ENCODE measurements at regions of chr6 and their contacts with region 1.

Region 1: DNA sequence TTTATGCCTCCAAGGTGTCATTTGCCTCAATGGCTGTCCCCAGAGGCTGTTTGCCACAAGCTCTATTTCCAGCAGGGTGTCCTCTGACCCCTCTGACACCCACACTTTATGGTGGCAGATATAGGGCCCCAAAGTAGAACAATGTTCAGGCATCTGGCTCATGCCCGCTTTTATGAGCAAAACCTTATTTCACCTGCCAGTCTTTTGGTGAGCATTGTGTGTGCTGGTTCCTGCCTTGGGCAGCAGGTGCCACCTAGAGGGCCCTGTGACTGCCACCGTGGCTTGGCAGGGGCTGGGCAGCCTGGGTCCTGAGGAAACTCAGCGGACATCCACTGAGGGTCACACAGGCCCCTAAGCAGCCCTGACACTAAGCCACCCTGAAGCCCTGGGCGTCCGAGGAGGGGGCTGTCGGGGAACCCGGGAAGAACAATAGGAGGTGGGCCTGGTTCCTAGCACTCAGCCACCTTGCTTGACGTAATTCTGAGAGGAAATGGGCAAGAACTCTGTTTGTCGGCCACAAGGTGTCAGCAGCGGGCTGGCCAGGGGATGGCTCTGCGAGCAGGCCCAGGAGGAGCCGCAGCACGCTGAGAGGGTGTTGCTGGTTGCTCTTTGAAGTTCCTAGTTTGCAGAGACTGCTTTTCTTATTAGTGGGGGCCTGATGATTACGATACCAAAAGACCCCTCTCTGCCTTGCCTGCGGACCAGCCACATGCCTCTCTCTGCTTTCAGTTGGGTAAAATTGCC is 148.9 kb downstream of the SCML4 start:
- DNase-seq: peak; percentile 89
- H3K4me3 ChIP-seq: peak overlapping the region; percentile 21
- H3K27ac ChIP-seq: no peak overlapping the region
- H3K4me1 ChIP-seq: peaks cover 25% of the 10 kb centered on the region
- CTCF ChIP-seq: peak; percentile 100

Region 2: DNA sequence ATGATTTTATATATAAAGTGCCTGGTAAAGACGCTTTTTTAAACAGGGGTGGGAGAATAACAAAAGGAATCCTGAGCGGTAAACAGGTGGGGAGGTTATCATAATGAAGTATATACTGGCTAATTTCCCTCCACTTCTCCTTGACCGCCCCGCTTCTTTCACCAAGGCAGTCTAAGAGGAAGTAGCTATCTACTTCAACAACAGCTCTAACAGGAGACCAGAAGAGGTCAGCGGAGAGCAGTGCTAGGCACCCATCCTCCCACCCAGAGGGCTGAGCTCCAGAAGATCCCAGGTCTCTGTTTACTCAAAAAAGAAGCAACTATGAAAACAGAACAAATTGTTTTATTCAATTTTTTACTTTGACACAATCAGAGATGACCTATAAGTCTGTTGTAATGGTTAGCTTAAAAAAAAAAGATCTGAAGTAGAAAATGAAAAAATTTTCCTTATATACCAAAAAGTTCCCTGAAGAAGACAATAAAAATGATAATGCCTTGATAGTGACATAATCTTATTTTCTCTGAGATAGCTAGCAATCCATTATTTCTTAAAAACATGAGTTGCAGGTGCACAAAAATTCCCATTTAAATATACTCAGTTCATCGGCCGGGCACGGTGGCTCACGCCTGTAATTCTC is 356.9 kb before region 1 on chr6:
- CTCF ChIA-PET with region 1: interaction called, 5 read pairs
- POLR2A ChIA-PET with region 1: interaction called, 3 read pairs
- intact Hi-C with region 1: loop called (anchors 1 kb)
- DNase-seq: peak; percentile 80
- H3K4me3 ChIP-seq: no peak overlapping the region
- H3K27ac ChIP-seq: no peak overlapping the region
- H3K4me1 ChIP-seq: peaks cover 33% of the 10 kb centered on the region
- CTCF ChIP-seq: peak; percentile 98

Region 3: DNA sequence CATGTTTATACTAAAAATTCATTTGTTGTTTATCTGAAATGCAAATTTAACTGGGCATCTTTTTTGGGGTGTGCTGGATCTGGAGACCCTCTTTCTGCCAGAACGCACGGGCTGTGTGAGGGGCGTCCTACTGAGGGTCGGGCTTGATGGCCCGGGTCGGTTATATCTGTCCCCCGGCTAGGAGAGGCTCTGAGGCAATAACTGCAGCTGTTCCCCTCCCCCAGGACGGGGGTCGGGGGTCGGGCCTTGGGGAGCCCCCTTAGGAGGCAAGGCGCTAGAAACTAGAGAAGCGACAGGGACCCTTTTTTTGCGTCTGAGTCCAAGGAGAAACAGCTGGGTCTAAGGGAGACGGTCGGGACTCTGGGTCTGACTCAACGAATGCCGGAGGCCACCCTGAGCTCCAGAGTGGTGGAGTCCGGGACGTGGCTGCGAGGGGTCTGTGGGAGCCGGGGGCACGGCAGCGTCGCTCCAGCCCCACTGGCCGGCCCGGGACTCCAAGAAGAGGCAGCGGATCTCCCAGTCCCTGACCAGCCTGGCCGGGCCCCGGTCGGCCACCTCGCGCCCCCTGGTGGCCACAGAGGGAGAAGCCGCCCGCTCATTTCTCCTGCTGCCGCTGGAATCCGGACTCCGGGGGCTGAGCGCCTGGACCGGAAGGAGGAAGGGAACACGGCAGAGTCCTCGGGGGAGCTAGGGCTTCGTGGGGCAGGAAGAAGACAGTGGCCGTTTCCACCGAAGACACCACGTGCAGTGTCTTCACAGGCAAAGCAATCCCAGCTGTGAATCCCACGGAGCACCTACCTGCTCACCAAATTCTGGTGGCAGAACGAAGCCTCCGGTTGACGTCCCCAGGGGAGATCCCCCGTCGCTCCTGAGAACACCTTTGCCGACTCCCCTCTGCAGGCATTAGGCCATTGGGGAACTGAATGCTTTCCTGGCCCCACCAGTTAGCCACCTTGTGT is 173.0 kb after region 1 on chr6:
- CTCF ChIA-PET with region 1: interaction called, 4 read pairs
- POLR2A ChIA-PET with region 1: interaction called, 4 read pairs
- intact Hi-C with region 1: loop called (anchors 1 kb)
- DNase-seq: peak; percentile 68
- H3K4me3 ChIP-seq: peak overlapping the region; percentile 49
- H3K27ac ChIP-seq: no peak overlapping the region
- H3K4me1 ChIP-seq: peaks cover 6% of the 10 kb centered on the region
- CTCF ChIP-seq: peak; percentile 95

Region 4: DNA sequence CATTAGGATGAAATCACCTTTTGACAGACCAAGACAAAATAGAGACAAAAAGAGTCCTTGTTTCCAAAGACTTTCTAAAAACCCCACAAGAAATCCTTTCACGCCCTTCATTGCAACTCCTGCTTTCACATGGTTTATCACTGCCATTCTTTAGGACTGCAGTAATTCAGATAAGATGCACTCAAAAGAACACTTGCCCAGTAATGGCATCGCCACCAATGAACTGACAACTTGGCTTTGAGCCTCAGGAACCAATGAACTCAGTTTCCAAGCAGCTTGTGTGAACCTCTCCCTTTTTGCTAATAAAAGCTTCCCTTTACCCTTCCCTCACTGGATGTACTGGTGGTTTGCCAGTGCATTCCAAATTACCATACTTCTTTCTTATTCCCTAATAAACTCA is 377.5 kb after region 1 on chr6:
- CTCF ChIA-PET with region 1: no interaction called
- POLR2A ChIA-PET with region 1: no interaction called
- intact Hi-C with region 1: loop called (anchors 1 kb)
- DNase-seq: no peak
- H3K4me3 ChIP-seq: no peak overlapping the region
- H3K27ac ChIP-seq: no peak overlapping the region
- H3K4me1 ChIP-seq: no peaks in the 10 kb centered on the region
- CTCF ChIP-seq: no peak